Calu3 (cell line): ENCODE measurements at regions of chr18 and their contacts with region 1.

Region 1: DNA sequence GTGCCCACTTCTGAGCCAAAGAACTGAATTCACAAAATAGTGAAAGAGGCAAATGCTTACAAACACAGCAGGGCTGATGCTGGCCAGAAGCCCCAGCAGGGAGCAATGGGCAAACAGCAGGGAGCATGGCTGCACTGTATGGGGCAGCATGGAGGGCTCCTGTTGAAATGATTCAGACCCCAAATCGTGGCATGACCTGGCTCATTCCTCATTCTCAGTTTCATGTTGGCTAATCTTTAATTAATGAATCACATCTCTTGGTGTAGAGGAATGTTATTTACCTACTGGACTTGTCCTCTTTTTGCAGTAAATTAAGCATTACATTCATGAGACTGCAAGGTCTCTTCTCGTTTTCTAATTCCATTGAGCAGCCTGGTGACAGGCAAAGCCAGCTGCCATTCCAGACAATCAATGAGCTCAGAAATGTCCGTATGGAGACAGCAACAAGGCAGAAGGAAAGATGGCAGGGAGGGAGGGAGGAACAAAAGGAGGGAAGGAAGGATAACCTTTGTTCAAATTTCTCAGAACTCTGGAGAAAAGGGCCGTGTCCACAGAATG is 84.9 kb upstream of the ST8SIA3 start:
- DNase-seq: peak; percentile 55
- H3K4me3 Mint-ChIP-seq: peak overlapping the region; percentile 29
- H3K27ac Mint-ChIP-seq: peak overlapping the region; percentile 97
- H3K4me1 Mint-ChIP-seq: peaks cover 68% of the 10 kb centered on the region
- H3K27me3 Mint-ChIP-seq: no peaks in the 10 kb centered on the region
- CTCF ChIP-seq: no peak

Region 2: DNA sequence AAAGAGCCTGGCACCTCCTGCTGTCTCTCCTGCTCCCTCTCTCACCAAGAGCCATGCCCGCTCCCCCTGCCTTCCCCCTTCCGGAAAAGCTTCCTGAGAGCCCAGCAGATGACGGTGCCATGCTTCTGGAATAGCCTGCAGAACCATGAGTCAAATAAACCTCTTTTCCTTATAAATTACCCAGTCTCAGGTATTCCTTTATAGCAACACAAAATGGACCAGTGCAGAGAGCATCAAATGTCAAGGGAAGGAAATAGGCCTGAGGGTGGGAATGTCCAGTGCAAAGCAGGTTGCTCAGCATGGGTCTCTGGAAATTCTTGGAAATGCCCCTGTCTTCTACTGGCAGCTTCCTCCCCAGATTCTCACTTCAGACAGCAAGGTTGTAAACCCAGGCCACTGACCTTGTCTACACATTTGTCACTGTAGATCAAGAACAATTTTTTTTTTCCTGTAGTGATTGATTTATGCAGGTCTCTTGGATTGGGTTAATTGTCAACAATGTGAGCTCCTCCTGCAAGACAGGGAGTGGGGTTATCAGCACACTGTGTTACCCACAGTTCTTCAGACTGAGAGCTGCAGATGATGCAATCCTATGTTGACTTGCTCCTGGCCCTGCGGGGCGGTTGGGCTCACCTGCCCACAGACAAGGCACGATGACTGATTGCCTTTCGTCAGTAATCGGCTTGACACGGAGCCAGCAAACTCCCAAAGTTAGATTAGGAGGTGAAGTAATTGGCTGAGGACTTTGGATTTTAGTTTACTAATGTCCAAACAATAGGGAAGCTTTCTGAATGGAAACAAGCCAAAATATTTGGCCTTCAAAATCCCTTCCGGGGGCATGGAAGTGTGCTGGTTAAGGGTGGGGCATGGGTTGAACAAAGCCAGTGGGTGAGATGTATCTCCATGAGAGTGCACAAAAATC is 126.0 kb before region 1 on chr18:
- CTCF ChIA-PET with region 1: no interaction called
- intact Hi-C with region 1: loop called (anchors 2 kb)
- DNase-seq: peak; percentile 86
- H3K4me3 Mint-ChIP-seq: peak overlapping the region; percentile 47
- H3K27ac Mint-ChIP-seq: peak overlapping the region; percentile 95
- H3K4me1 Mint-ChIP-seq: peaks cover 24% of the 10 kb centered on the region
- H3K27me3 Mint-ChIP-seq: no peaks in the 10 kb centered on the region
- CTCF ChIP-seq: no peak